GM10248 (cell line): ENCODE measurements at regions of chr9 and their contacts with region 1.

Region 1: DNA sequence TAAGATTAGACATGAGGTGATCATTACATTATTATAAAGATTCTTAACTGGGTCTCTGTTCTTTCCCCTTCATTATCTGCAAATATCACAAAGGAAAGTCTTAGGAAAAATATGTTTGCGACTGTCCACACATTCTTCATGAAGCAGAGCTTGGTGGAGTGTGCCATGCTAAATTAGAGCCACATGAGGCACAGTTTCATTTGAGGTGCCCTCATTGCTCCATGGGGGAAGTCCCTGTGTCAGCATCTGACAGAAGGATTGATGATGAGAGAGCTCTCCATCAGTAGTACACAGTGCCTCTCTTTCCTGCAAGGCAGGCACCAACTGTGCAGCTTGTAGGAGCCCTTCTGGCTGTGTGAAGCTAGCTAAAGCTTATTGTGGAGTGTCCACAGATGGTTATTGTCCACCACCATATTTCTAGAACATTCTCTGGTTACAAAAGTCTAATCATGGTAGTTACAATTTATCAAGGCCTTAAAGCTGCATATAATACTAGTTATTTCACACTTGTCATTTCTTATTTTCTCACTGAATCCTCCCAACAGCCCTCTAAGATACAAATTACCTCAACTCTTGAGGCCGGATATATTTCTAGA is 63.9 kb downstream of the C9orf152 start:
- DNase-seq: no peak
- CTCF ChIP-seq: no peak

Region 2: DNA sequence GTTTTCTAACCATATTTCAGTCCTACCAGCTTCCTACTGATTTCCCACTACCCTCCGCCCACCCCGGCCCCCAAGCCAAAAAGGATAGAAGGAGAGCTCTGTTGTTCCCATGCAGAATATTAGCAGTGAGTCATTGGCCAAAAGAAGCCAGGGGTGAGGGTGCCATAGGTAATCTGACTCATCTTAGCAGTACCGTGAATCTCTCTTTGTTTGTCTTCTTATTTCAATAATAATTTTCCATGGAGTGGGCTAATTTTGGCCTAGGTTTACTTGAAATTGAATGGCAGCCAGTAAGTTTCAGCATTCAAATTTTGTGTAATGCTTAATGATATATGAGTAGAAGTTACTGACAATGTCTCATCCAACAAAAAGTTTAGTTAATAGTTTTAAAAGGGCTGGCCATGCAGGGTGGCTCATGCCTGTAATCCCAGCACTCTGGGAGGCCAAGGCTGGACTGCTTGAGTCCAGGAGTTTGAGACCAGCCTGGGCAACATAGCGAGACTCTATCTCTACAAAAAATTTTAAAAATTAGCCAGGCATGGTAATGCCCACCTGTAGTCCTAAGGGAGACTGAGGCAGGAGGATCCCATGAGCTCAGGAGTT is 10.3 kb before region 1 on chr9:
- CTCF ChIA-PET with region 1: interaction called, 25 read pairs
- POLR2A ChIA-PET with region 1: interaction called, 10 read pairs
- DNase-seq: no peak
- CTCF ChIP-seq: no peak